Activated CD4-positive, alpha-beta memory T cell treated with anti-CD3 and anti-CD28 coated beads, Interleukin-2, amount 10 ng/mL, durations not matched to agents 7 days and 5 days (primary cell): ENCODE measurements at regions of chr22 and their contacts with region 1.

Region 1: GRCh38 chr22:33018232-33018864 is 39.8 kb downstream of the SYN3 start:
- DNase-seq: peak; percentile 35
- H3K4me3 Mint-ChIP-seq: no peak overlapping the region
- H3K27ac Mint-ChIP-seq: no peak overlapping the region
- H3K4me1 Mint-ChIP-seq: no peaks in the 10 kb centered on the region
- H3K27me3 Mint-ChIP-seq: no peaks in the 10 kb centered on the region

Region 2: DNA sequence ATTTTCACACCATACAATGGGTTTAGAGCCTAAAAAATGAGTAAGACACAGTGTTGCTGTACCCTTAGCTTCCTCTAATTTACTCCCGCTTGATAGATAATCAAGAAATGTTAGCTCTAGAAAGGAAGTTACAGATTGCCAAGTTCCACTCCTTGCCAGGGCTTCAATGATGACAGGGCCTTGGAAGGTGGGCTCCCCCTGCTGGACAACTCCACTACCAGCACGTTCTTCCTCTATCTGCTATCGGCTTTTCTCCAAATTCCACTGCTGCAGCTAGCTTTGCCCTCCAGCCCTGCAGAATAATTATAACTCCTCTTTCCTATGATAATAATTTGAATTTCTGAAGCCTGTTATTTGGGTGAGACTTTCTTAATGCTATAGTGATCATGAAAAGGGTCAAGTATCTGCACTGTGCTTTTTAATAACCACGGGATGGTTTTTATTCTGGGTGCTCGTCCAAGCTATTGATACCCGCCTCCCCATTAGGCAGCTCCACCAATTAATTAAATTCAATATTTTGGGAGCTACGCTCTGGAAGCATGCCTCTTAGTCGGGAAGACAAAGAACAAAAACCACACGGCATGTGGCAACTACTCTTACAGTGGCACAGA is 30.9 kb after region 1 on chr22:
- CTCF ChIA-PET with region 1: interaction called, 10 read pairs
- POLR2A ChIA-PET with region 1: no interaction called
- DNase-seq: peak; percentile 51
- H3K4me3 Mint-ChIP-seq: no peak overlapping the region
- H3K27ac Mint-ChIP-seq: no peak overlapping the region
- H3K4me1 Mint-ChIP-seq: no peaks in the 10 kb centered on the region
- H3K27me3 Mint-ChIP-seq: peaks cover 24% of the 10 kb centered on the region

Region 3: GRCh38 chr22:33209930-33210784 is 191.8 kb after region 1 on chr22:
- CTCF ChIA-PET with region 1: interaction called, 10 read pairs
- POLR2A ChIA-PET with region 1: no interaction called
- DNase-seq: peak; percentile 16
- H3K4me3 Mint-ChIP-seq: no peak overlapping the region
- H3K27ac Mint-ChIP-seq: no peak overlapping the region
- H3K4me1 Mint-ChIP-seq: no peaks in the 10 kb centered on the region
- H3K27me3 Mint-ChIP-seq: no peaks in the 10 kb centered on the region